ENCODE measurements at regions of chr1 and their contacts with region 1.

Region 1: GRCh38 chr1:73452522-73452921 is 745.5 kb downstream of the LRRIQ3 start:
- DNase-seq: no peak
- H3K4me3 ChIP-seq: no peak overlapping the region
- CTCF ChIP-seq: peak; percentile 28

Region 2: DNA sequence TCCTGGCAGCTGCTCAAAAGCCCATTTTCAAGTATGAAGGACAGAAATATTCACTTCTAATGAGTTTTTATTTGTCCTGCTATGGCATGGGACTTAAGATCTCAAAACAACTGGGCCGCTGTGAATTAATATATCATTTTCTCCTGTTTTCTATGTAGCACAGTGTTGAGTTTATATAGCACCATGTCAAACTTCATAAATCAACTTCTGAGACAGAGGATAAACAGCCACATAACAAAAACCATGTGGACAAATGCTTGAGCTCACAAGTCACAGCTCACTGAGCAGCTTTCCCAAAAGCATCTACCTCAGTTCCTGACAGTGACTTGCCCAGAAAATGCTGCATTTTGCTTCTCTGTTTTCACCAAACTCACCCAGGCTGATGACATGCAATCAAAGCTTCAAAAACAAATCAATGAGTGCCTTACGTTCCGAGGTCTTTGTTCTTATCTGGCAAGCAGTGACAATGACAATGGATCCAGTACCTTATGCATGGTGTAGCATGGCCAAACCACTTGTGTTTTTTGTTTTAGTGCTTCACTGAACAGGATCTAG is 22.9 kb after region 1 on chr1:
- in situ Hi-C with region 1: loop called (anchors 5 kb)
- DNase-seq: no peak
- H3K4me3 ChIP-seq: no peak overlapping the region
- CTCF ChIP-seq: no peak

Measured in astrocyte of the cerebellum (primary cell).